Ascending aorta (tissue), 2 donors: ENCODE measurements at regions of chr18 and their contacts with region 1.

Region 1: GRCh38 chr18:2994603-2995432 is 18.1 kb downstream of the LPIN2 start:
- DNase-seq: peak in 1 of 2 donors; percentile 75
- H3K4me3 ChIP-seq: no peak overlapping the region
- H3K27ac ChIP-seq: peak overlapping the region; percentile 60 to 71
- H3K4me1 ChIP-seq: peaks cover 7 to 32% of the 10 kb centered on the region in 2 donors
- H3K27me3 ChIP-seq: no peaks in the 10 kb centered on the region
- CTCF ChIP-seq: peak; percentile 47 to 60 (median 50)

Region 2: DNA sequence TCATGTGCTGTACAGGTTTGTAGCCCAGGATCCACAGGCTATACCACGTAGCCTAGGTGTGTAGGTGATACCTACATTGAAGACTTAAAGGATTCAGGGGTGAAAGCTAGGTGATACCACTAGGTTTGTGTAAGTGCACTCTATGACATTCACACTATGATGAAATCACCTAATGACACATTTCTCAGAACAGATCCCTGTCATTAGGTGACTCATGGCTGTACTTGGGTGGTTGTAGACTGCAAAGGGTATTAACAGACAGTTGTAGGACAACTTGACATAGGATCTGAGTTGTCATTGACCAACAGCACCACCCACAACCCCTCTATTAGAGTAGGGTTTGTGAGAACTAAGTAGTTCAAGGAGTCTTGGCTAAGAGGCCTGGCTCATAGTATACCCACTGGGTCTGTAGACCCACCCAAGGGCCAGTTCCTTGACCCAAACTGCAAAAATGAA is 367.0 kb before region 1 on chr18:
- intact Hi-C with region 1: no loop called
- DNase-seq: no peak
- H3K4me3 ChIP-seq: no peak overlapping the region
- H3K27ac ChIP-seq: no peak overlapping the region
- H3K4me1 ChIP-seq: no peaks in the 10 kb centered on the region
- H3K27me3 ChIP-seq: no peaks in the 10 kb centered on the region
- CTCF ChIP-seq: no peak

Region 3: GRCh38 chr18:2843146-2843545 is 151.7 kb before region 1 on chr18:
- intact Hi-C with region 1: no loop called
- DNase-seq: no peak
- H3K4me3 ChIP-seq: no peak overlapping the region
- H3K27ac ChIP-seq: no peak overlapping the region
- H3K4me1 ChIP-seq: peaks cover 4 to 5% of the 10 kb centered on the region in 2 donors
- H3K27me3 ChIP-seq: no peaks in the 10 kb centered on the region
- CTCF ChIP-seq: no peak

Region 4: DNA sequence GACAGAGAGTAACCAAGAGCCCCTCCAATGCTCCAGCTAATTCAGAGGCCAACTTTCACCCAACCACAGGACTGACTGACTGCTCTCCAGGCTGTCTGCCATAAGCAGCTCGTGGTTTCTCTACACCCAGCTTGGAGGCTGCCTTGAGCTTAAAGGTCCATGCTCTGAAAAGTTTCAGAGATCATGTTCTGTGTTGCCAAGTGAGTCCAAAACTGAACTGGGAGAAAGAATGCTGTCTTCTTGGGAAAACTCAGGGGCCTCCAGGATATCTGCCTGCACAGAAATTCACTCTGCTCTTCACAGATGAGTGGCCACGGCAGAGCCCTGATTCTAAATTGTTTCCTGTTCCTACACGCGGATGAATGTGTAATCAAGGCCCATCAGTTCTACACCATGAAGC is 33.0 kb before region 1 on chr18:
- intact Hi-C with region 1: loop called (anchors 5 kb)
- DNase-seq: no peak
- H3K4me3 ChIP-seq: peak overlapping the region in 1 of 2 donors; percentile 23
- H3K27ac ChIP-seq: peak overlapping the region; percentile 74
- H3K4me1 ChIP-seq: peaks cover 22 to 38% of the 10 kb centered on the region in 2 donors
- H3K27me3 ChIP-seq: no peaks in the 10 kb centered on the region
- CTCF ChIP-seq: no peak

Region 5: DNA sequence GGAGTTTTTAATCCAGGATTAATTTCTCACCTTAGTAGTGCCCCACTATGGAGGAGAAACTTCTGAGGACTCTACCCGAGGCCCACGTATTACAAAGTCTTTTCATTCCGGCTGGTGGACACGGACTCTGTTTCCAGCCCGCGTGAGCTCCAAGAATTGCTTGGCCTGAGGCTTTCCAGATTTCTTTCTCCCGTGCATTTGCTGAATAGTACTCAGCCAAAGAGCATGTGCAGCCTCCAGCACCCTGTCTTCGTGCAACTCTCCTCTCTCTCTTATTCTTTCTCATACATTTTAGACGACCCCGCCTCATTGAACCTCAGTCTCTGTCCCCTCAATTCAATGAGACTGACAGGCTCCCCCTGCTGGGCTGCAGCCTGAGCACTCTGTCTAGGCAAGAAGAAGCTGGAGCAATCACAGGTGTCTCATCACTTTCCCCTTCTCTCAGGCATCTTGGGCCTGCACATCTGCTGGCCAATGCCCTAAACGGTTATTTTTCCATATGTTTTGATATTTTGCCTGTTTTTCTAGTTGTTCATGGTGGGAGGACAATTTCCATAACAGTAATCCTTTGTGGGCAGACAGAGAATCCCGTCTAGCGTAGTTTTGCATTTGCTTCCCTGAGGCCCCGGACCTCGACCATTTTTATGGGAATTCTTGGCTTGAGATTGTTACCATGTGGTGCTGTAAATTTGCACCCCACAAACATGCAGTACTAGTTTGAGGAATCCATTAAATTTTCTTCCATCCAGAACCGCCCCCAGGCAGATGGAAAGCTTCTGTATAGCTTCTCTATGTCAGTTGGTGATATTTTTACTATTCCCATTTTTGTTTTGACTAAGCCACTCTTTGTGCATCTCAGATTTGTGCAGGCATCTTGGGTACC is 68.2 kb after region 1 on chr18:
- intact Hi-C with region 1: loop called (anchors 5 kb)
- DNase-seq: peak in 1 of 2 donors; percentile 81
- H3K4me3 ChIP-seq: peak overlapping the region in 1 of 2 donors; percentile 34
- H3K27ac ChIP-seq: no peak overlapping the region
- H3K4me1 ChIP-seq: peaks cover 0 to 3% of the 10 kb centered on the region in 2 donors
- H3K27me3 ChIP-seq: no peaks in the 10 kb centered on the region
- CTCF ChIP-seq: peak; percentile 55 to 78 (median 78)